Posterior cingulate gyrus (tissue), 11 donors: ENCODE measurements at regions of chr20 and their contacts with region 1.

Region 1: DNA sequence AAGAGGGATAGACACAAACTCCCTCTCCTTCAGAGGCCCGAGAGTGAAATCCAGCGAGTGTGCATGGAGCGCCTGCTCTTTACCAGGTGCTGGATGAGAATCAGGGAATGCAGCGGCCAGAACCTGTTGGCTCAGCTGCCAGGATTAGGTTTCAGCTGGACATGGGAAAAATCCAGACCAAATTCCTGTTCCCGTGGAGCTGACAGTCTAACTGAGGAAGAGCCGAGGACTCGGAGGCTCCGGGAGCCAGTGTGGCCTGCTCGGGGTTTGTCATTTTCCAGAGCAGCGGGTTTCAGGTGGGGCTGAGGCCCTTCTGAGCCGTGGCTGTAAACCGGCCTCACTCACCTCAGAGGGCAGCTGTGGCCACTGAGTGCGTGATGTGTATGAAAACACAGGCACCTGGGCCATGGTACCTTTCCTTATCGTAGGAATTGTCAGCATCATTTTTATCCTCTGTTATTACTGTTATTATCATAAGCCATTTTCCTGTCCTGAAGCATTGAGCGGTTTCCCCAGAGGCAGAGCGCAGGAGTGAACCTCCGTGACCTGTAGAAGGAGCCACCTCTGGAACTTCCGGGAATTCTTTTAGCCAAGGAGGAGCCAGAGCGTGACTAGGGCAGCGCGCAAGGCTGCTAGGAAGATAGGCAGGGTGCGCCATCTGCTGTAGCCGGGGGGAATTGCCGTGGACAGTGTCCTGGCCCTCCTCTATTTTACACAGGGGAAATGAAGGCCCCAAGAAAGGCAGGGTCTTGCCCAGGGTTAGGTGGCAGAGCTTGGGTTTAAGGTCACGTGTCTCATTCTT is 27.3 kb downstream of the PKIG start:
- DNase-seq: peak; percentile 77 to 97 (median 92)

Region 2: GRCh38 chr20:44210422-44211176 is 399.1 kb before region 1 on chr20 and contains the start of gene OSER1:
- intact Hi-C with region 1: loop called (anchors 10 kb)
- DNase-seq: peak; percentile 92 to 99 (median 97)

Region 3: GRCh38 chr20:44388466-44389023 is 221.2 kb before region 1 on chr20:
- intact Hi-C with region 1: loop called (anchors 5 kb)
- DNase-seq: peak; percentile 38 to 95 (median 71)

Region 4: GRCh38 chr20:44475694-44476560 is 133.8 kb before region 1 on chr20 and contains the start of gene TTPAL:
- intact Hi-C with region 1: loop called (anchors 10 kb)
- DNase-seq: peak; percentile 78 to 98 (median 86)

Region 5: DNA sequence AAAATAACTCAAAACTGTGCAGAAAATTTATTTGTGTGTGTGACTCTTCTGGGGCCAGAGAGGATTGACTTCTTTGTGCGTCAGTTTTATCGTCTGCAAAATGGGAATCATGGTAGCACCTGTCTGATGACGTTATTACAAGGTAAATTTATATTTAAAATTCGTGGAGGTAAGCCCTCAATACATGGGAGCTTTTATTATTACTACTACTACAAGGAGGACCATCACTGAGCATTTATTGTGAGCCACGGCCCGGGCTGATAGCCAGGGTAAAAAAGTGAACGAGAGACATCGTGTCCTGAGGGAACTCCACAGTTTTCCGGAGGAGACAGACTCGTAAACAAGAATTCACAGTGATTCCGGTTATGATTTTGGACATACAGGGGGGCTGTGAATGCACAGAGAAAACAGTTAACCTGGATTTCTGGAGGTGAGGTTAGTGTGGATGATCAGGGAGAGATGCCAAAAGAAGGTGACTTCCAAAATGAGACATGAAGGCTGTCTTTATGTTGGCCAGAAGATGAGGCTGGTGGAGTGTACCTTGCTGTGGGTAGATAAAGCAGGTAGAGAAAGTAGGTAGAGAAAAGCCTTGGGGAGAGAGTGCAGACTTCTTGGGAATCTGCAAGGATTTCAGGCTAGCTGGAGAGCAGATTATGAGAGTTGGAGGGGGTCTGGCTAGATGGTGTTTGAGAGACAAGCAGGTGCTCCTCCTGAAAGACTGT is 77.3 kb before region 1 on chr20:
- intact Hi-C with region 1: loop called (anchors 2 kb)
- DNase-seq: peak in 1 of 10 donors; percentile 23